Mammary epithelial cell (primary cell): ENCODE measurements at regions of chr5 and their contacts with region 1.

Region 1: GRCh38 chr5:139968547-139969261 is 74.4 kb downstream of the NRG2 start:
- DNase-seq: peak; percentile 74
- H3K4me3 ChIP-seq: no peak overlapping the region
- H3K27ac ChIP-seq: no peak overlapping the region
- H3K4me1 ChIP-seq: peaks cover 4% of the 10 kb centered on the region
- H3K27me3 ChIP-seq: no peaks in the 10 kb centered on the region
- CTCF ChIP-seq: peak; percentile 99 to 100

Region 2: DNA sequence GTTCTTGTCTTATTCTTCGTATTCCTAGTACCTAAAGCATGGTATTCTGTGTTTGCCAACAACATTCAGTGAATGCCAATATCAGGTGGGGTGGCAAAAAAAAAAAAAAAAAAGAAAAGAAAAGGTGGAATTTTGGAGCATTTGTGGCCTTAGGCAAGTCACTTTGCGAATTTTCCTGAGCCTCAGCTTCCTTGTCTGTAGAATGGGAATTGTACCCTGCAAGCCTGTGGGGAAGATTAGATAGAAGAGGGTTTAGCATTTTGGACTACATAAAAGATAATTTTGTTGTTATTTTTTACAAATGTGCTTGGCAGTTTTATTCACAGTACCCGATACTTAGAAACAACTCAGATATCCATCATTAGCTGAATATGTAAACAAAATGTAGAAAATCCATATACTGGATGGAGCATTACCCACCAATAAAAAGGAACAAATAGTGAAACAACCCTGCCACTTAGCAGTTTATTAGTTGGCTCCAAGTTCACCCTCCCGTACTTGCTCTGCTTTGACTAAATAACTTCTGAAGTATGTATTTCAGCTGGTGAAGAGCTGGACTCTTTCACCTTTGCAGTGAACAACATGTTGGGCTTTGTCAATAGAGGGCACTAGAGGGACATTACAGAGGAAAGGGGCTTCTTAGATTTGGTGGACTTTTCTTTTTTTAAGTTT is 393.9 kb before region 1 on chr5:
- CTCF ChIA-PET with region 1: no interaction called
- dilution Hi-C with region 1: loop called (anchors 10 kb)
- in situ Hi-C with region 1: no loop called
- intact Hi-C with region 1: no loop called
- DNase-seq: no peak
- H3K4me3 ChIP-seq: no peak overlapping the region
- H3K27ac ChIP-seq: no peak overlapping the region
- H3K4me1 ChIP-seq: peaks cover 4% of the 10 kb centered on the region
- H3K27me3 ChIP-seq: no peaks in the 10 kb centered on the region
- CTCF ChIP-seq: peak; percentile 72 to 76

Region 3: GRCh38 chr5:139844472-139845145 is 124.1 kb before region 1 on chr5:
- CTCF ChIA-PET with region 1: interaction called, 3 read pairs
- dilution Hi-C with region 1: no loop called
- in situ Hi-C with region 1: no loop called
- intact Hi-C with region 1: loop called (anchors 1 kb)
- DNase-seq: peak; percentile 41
- H3K4me3 ChIP-seq: no peak overlapping the region
- H3K27ac ChIP-seq: no peak overlapping the region
- H3K4me1 ChIP-seq: no peaks in the 10 kb centered on the region
- H3K27me3 ChIP-seq: no peaks in the 10 kb centered on the region
- CTCF ChIP-seq: peak; percentile 75 to 80

Region 4: DNA sequence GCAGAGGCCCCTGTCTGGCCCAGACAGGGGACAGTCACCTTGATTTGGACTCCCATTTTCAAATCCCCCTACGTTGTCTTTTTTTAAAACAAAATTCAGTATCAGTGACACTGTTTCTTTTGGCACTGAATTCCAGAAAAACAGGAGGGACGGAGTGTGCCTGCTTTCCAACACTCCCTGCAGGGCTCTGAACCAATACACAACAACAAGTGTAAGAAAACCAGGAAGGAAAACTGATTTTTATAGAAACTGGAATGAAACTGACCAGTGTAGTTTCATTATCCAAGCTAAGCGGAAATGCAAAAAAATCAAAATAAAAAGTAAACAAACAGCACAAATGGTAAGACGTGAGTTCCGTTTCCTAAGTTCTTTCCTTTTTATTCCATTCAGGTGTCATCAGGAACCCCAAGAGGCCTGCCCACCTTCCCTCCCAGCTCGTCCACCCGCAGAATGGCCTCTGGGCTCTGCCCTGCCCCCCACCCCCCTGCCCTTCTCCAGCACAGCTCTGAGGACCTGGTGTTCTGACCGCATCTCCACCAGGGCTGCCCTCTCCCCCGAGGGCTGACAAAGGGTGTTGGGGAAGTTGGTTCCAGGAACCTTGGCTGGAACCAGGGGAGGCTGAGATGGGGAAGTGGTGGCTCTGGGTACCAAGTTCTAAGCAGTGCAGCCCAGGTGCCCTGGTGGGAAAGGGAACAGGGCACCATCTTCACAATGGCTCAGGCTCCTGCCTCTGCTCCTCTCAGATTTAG is 99.5 kb before region 1 on chr5:
- CTCF ChIA-PET with region 1: no interaction called
- dilution Hi-C with region 1: loop called (anchors 5 kb)
- in situ Hi-C with region 1: no loop called
- intact Hi-C with region 1: loop called (anchors 1 kb)
- DNase-seq: no peak
- H3K4me3 ChIP-seq: no peak overlapping the region
- H3K27ac ChIP-seq: no peak overlapping the region
- H3K4me1 ChIP-seq: no peaks in the 10 kb centered on the region
- H3K27me3 ChIP-seq: no peaks in the 10 kb centered on the region
- CTCF ChIP-seq: no peak

Region 5: DNA sequence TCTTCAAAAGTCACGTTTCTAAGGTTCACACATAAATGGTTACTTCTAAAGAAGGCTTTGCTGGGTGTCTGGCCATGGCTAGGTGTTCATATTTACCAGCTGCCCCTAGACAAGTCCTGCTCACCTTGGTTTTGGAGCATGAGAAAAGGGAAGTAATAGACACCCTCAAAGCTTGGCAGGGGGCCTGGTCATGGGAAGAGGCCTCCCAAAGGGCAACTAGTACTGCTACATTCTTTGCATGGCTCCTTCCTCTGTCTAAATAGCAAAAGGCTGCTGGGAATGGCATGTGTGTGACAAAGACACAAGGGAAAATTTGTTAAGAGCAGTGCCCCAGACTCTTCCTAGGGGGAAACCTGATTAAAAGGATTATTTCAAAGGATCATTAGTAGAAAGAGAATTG is 19.0 kb before region 1 on chr5:
- CTCF ChIA-PET with region 1: no interaction called
- dilution Hi-C with region 1: no loop called
- in situ Hi-C with region 1: no loop called
- intact Hi-C with region 1: loop called (anchors 1 kb)
- DNase-seq: no peak
- H3K4me3 ChIP-seq: no peak overlapping the region
- H3K27ac ChIP-seq: no peak overlapping the region
- H3K4me1 ChIP-seq: no peaks in the 10 kb centered on the region
- H3K27me3 ChIP-seq: no peaks in the 10 kb centered on the region
- CTCF ChIP-seq: no peak

Region 6: GRCh38 chr5:140011297-140011802 is 42.6 kb after region 1 on chr5:
- CTCF ChIA-PET with region 1: no interaction called
- dilution Hi-C with region 1: no loop called
- in situ Hi-C with region 1: no loop called
- intact Hi-C with region 1: no loop called
- DNase-seq: peak; percentile 51
- H3K4me3 ChIP-seq: no peak overlapping the region
- H3K27ac ChIP-seq: no peak overlapping the region
- H3K4me1 ChIP-seq: no peaks in the 10 kb centered on the region
- H3K27me3 ChIP-seq: peaks cover 4% of the 10 kb centered on the region
- CTCF ChIP-seq: no peak

Region 7: DNA sequence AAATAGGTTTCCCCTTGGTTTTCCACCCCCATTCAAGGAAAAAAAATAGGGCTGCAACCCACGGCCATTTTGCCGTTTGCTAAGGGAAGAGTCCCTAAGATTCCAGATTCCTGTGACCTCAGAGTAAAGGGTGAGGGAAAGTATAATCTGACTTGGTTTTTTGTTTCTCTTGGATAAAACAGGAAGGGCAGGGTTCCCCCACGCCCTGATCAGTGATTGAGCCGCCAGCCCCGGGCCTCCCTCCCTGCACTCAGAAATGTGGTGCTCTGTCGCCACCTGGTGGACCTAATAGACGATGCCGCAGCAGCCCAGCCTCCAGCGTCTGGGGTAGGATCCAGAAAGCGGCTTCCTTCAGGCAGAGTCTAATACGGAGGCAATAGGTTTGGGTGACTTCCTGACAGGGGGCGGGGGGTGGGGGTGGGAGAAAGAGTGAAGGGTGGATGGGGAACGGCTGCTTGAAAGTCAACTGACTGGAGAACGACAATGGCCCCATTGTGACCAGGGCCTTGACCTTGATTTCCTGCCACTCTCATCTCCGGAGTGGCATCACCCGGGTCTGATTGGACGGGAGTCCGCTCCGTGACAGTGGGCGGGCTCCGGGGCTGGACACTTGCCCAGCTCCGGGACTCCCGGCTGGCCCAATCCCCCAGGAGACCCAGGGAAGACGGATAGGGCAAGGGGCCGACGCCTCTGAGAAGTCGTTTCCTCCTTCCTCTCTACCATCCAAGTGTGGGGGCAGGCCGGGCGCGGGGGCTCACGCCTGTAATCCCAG is 188.5 kb after region 1 on chr5:
- CTCF ChIA-PET with region 1: interaction called, 3 read pairs
- dilution Hi-C with region 1: no loop called
- in situ Hi-C with region 1: no loop called
- intact Hi-C with region 1: loop called (anchors 1 kb)
- DNase-seq: peak; percentile 66
- H3K4me3 ChIP-seq: peak overlapping the region in 2 of 3 experiments; percentile 23 to 41
- H3K27ac ChIP-seq: peak overlapping the region; percentile 9
- H3K4me1 ChIP-seq: peaks cover 8% of the 10 kb centered on the region
- H3K27me3 ChIP-seq: no peaks in the 10 kb centered on the region
- CTCF ChIP-seq: peak; percentile 73 to 90

Region 8: GRCh38 chr5:140468188-140468587 is 499.5 kb after region 1 on chr5:
- CTCF ChIA-PET with region 1: no interaction called
- dilution Hi-C with region 1: no loop called
- in situ Hi-C with region 1: no loop called
- intact Hi-C with region 1: no loop called
- DNase-seq: no peak
- H3K4me3 ChIP-seq: no peak overlapping the region
- H3K27ac ChIP-seq: no peak overlapping the region
- H3K4me1 ChIP-seq: no peaks in the 10 kb centered on the region
- H3K27me3 ChIP-seq: no peaks in the 10 kb centered on the region
- CTCF ChIP-seq: no peak